ENCODE measurements at regions of chr10 and their contacts with region 1.

Region 1: DNA sequence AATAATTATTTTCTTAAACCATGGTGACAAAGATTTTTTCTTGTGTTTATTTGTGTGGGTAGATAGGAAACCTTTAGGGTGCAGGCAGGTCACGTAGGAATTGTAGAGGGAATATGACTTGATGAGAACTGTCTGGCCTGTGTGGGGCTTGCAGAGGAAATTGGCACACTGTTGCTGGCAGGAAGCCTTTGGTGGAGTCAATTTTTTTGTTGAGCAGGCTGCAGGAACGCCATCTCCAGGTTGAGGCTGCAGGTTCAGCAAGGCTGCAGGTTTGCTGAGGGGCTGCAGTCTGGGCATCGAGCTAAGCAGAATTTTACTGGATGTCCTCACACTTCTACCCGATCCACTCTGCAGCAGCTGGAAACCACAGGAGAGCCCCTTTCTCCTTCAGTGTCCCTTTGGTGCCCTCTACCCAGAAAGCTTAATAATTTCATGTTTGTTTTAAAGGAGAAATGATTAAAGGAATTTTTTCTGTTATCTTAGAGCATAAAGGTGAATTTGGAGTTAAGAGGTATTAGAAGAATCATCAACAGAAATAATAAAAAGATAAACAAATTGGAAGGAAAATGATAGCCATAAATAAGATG is 37.0 kb downstream of the TBC1D12 start:
- DNase-seq: peak; percentile 32
- H3K4me3 ChIP-seq: no peak overlapping the region
- H3K27ac ChIP-seq: no peak overlapping the region
- H3K4me1 ChIP-seq: no peaks in the 10 kb centered on the region
- H3K27me3 ChIP-seq: no peaks in the 10 kb centered on the region
- CTCF ChIP-seq: no peak
- POLR2A ChIP-seq: no peak

Region 2: DNA sequence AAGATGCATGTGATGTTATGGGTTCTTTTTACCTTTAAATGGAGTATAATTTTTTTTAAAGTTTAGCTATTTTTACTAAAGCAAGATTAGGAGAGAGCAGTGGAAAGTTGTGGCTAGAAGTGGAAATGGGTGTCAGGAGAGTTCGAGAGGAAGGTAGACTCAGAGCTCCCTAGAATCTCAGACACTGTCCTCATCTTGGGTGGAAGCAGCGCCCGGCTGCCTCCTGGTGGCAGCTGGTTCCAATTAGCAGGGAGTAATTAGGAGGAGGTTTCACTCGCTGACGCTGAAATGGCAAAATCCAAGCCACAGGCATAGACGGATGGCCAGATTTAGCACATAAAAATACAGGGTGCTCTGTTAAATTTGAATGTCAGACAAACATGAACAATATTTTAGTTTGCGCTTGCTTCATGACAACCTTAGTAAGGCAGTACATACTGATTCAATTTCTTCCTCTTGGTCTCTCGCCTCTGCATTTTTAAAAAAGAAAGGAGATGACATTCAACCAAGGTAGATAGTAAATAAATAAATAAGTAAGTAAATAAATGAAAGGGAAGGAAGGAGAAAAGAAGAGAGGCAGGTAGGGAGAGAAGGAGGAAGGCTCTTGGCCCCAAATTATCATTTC is 623.1 kb before region 1 on chr10:
- CTCF ChIA-PET with region 1: interaction called, 20 read pairs
- POLR2A ChIA-PET with region 1: no interaction called
- dilution Hi-C with region 1: no loop called
- intact Hi-C with region 1: loop called (anchors 10 kb)
- DNase-seq: peak; percentile 44
- H3K4me3 ChIP-seq: no peak overlapping the region
- H3K27ac ChIP-seq: no peak overlapping the region
- H3K4me1 ChIP-seq: no peaks in the 10 kb centered on the region
- H3K27me3 ChIP-seq: peaks cover 22 to 24% of the 10 kb centered on the region in 2 experiments
- CTCF ChIP-seq: peak; percentile 51 to 70
- POLR2A ChIP-seq: no peak

Region 3: DNA sequence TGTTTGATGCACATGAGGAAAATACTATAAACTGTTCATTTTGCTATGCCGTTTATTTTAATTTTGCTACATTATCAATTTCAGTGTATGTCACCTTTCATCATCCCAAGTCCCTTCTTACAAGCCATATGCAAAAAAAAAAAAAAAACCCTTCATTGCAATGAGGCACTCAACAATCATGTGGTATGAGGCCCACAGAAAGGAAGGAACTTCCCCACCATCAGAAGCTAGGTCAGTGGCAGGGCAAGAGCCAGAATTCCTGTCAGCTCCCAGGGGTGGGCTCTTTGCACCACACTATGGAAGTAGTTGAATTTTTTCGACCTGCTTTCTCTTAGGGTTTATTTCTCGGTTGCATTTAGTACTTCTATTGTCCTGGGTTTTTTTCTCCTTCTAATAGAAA is 152.0 kb before region 1 on chr10:
- CTCF ChIA-PET with region 1: interaction called, 27 read pairs
- POLR2A ChIA-PET with region 1: no interaction called
- dilution Hi-C with region 1: no loop called
- intact Hi-C with region 1: no loop called
- DNase-seq: peak; percentile 88
- H3K4me3 ChIP-seq: no peak overlapping the region
- H3K27ac ChIP-seq: no peak overlapping the region
- H3K4me1 ChIP-seq: no peaks in the 10 kb centered on the region
- H3K27me3 ChIP-seq: peaks cover 0 to 2% of the 10 kb centered on the region in 2 experiments
- CTCF ChIP-seq: no peak
- POLR2A ChIP-seq: no peak

Region 4: DNA sequence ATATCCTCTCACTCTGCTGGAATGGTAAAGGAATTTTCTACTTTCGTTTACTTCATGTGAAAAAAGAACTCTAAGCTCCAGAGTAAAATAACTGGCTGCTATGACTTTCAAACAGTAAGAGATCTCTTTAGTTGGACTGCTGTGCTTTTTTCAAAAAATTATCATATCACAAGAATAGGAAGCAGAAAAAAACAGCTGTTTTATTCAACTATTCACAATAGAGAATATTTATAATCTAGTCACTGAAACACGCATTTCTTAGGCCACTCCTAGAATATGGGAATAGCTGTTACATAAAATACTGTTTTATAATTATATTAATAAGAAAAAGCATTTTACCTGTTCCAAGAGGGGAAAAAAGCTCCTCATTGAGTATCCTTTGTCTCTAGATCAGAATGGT is 106.3 kb before region 1 on chr10:
- CTCF ChIA-PET with region 1: interaction called, 27 read pairs
- POLR2A ChIA-PET with region 1: no interaction called
- dilution Hi-C with region 1: no loop called
- intact Hi-C with region 1: no loop called
- DNase-seq: no peak
- H3K4me3 ChIP-seq: no peak overlapping the region
- H3K27ac ChIP-seq: no peak overlapping the region
- H3K4me1 ChIP-seq: no peaks in the 10 kb centered on the region
- H3K27me3 ChIP-seq: no peaks in the 10 kb centered on the region
- CTCF ChIP-seq: no peak
- POLR2A ChIP-seq: no peak

Region 5: GRCh38 chr10:94362360-94363250 is 76.8 kb before region 1 on chr10 and contains the start of gene NOC3L:
- CTCF ChIA-PET with region 1: interaction called, 44 read pairs
- POLR2A ChIA-PET with region 1: interaction called, 3 read pairs
- dilution Hi-C with region 1: no loop called
- intact Hi-C with region 1: loop called (anchors 1 kb)
- DNase-seq: peak; percentile 92
- H3K4me3 ChIP-seq: peak within 1 kb of the TSS; percentile 46 to 87 (median 74)
- H3K27ac ChIP-seq: peak within 1 kb of the TSS; percentile 37
- H3K4me1 ChIP-seq: peaks cover 14% of the 10 kb centered on the region
- H3K27me3 ChIP-seq: peaks cover 3 to 7% of the 10 kb centered on the region in 2 experiments
- CTCF ChIP-seq: peak; percentile 75
- POLR2A ChIP-seq: peak; percentile 90
- total RNA-seq, gene NOC3L: 19.8 and 20.5 TPM in 2 replicates

Region 6: GRCh38 chr10:94412449-94412848 is 26.9 kb before region 1 on chr10:
- CTCF ChIA-PET with region 1: interaction called, 27 read pairs
- POLR2A ChIA-PET with region 1: no interaction called
- dilution Hi-C with region 1: no loop called
- intact Hi-C with region 1: no loop called
- DNase-seq: no peak
- H3K4me3 ChIP-seq: no peak overlapping the region
- H3K27ac ChIP-seq: no peak overlapping the region
- H3K4me1 ChIP-seq: no peaks in the 10 kb centered on the region
- H3K27me3 ChIP-seq: no peaks in the 10 kb centered on the region
- CTCF ChIP-seq: no peak
- POLR2A ChIP-seq: no peak

Region 7: DNA sequence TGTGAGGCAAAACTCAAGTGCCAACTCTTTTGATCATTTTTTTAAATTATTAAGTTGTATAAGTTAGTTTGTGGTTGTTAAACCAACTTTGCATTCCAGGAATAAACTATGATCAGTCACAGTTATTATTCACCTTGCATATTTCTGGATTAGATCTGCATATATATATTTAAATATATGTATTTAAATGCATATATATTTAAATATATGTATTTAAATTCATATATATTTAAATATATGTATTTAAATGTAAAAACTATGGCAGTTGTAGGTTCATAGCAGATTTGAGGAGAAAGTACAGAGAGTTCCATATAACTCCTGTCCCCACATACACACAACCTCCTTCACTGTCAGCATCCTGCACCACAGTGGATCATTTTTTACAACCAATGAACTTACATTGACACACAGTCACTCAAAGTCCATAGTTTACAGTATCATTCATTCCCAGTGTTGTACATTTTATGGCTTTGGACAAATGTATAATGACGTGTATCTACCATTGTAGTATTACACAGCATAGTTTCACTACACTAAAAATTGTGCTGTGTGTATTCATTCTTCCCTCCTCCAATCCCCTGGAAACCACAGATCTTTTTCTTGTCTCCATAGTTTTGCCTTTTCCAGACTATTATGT is 12.6 kb after region 1 on chr10:
- CTCF ChIA-PET with region 1: interaction called, 40 read pairs
- POLR2A ChIA-PET with region 1: interaction called, 4 read pairs
- dilution Hi-C with region 1: no loop called
- intact Hi-C with region 1: no loop called
- DNase-seq: no peak
- H3K4me3 ChIP-seq: no peak overlapping the region
- H3K27ac ChIP-seq: no peak overlapping the region
- H3K4me1 ChIP-seq: no peaks in the 10 kb centered on the region
- H3K27me3 ChIP-seq: no peaks in the 10 kb centered on the region
- CTCF ChIP-seq: no peak
- POLR2A ChIP-seq: no peak

Region 8: GRCh38 chr10:94591461-94592205 is 152.3 kb after region 1 on chr10:
- CTCF ChIA-PET with region 1: no interaction called
- POLR2A ChIA-PET with region 1: no interaction called
- dilution Hi-C with region 1: no loop called
- intact Hi-C with region 1: no loop called
- DNase-seq: no peak
- H3K4me3 ChIP-seq: no peak overlapping the region
- H3K27ac ChIP-seq: no peak overlapping the region
- H3K4me1 ChIP-seq: no peaks in the 10 kb centered on the region
- H3K27me3 ChIP-seq: no peaks in the 10 kb centered on the region
- CTCF ChIP-seq: no peak
- POLR2A ChIP-seq: no peak

Region 9: DNA sequence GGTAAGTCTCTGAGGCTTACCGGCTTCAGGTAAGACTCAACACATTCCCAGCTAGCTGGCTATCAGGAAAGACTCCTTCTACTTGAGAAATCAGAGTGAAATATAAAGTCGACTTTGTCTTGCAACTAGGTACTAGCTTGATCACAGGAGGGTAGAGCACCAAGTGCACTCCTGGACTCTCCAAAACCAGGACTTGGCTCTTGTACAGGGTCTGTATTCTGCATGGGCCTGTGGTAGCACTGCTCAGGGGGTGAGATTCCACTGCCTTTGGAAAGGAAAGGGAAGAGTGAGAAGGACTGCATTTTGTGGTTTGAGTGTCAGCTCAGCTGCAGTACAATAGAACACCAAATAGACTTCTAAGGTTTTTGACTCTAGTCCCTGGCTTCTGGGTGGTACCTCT is 610.6 kb after region 1 on chr10:
- CTCF ChIA-PET with region 1: no interaction called
- POLR2A ChIA-PET with region 1: no interaction called
- dilution Hi-C with region 1: no loop called
- intact Hi-C with region 1: no loop called
- DNase-seq: no peak
- H3K4me3 ChIP-seq: no peak overlapping the region
- H3K27ac ChIP-seq: no peak overlapping the region
- H3K4me1 ChIP-seq: no peaks in the 10 kb centered on the region
- H3K27me3 ChIP-seq: no peaks in the 10 kb centered on the region
- CTCF ChIP-seq: no peak
- POLR2A ChIP-seq: no peak

Measured in endothelial cell of umbilical vein (primary cell).